ENCODE measurements at regions of chr1 and their contacts with region 1.

Region 1: DNA sequence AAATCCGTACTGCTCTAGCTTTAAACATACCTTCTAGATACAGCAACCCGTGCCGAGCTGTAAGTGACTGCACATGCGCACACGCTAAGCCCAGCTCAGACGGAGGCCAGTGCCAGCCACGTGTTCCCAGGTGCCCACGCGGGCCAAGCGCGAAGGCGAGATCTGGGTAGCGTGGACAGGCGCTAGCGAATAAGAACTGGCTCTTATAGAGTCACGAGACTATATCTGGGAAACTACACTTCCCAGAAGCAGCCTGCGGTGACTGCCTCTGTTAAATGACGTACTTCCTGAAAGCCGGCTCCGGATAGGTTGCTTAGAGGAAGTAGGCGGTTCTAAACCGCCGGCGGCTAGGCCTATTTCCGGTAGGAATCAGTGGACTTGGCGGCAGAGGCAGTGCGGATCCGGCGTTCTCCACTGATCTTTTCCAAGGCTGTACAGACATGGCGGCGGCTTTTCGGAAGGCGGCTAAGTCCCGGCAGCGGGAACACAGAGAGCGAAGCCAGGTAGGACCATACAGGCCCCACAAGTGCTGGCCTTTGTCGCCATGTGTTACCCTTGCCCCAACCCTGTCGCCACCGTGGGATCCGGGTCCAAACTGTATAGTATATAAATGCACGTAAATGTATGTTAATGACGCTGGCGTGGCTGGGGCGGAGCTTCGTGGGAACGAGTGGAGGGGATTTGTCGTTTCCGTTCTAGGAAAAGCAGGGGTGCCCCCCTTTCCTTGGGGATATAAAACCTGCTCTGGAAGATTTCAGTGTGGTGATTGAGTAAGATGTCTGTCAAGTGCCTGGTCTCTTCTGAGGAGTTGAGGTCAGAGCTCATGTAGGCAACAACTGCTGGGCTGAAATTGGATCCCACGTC is at the start of gene UTP11:
- DNase-seq: peak; percentile 98
- H3K4me3 ChIP-seq: peak within 1 kb of the TSS; percentile 80
- H3K27me3 ChIP-seq: no peaks in the 10 kb centered on the region
- CTCF ChIP-seq: no peak
- polyA plus RNA-seq, gene UTP11: 18.3 and 29.6 TPM in 2 replicates

Region 2: GRCh38 chr1:37989361-37989930 is 23.1 kb before region 1 on chr1:
- CTCF ChIA-PET with region 1: interaction called, 26 read pairs
- POLR2A ChIA-PET with region 1: no interaction called
- DNase-seq: no peak
- H3K4me3 ChIP-seq: peak overlapping the region; percentile 86
- H3K27me3 ChIP-seq: no peaks in the 10 kb centered on the region
- CTCF ChIP-seq: no peak

Region 3: DNA sequence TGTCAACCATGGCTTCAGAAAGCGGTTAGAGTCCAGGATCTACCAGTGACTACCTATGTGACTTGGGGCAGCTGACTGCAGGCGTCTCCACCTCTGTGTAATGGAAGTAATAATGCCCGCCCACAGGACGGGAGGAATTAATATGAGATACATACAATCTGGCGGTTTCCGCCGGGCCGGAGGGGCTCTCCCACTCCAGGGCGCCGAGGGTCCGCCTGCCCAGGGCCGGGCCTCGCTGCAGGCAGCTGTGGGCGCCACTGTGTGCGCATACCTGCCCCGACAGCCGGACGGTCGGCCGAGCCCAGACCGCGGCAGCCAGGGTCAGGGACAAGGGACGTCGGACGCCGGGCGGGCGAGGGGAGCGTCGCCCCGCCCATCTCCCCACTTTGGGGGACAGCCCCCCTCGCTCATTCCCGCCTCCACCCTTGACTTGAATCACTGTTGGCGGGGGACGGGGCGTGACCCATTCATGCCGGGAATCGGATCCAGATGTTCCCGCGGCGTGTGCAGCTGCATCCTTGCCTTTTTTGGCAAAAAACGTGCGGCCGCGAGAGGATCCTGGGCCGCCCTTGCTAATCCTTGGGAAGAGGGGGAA is 16.7 kb before region 1 on chr1:
- CTCF ChIA-PET with region 1: interaction called, 26 read pairs
- POLR2A ChIA-PET with region 1: interaction called, 5 read pairs
- DNase-seq: no peak
- H3K4me3 ChIP-seq: peak overlapping the region; percentile 41
- H3K27me3 ChIP-seq: no peaks in the 10 kb centered on the region
- CTCF ChIP-seq: no peak

Measured in BJ (cell line).